ENCODE measurements at regions of chr2 and their contacts with region 1.

Region 1: DNA sequence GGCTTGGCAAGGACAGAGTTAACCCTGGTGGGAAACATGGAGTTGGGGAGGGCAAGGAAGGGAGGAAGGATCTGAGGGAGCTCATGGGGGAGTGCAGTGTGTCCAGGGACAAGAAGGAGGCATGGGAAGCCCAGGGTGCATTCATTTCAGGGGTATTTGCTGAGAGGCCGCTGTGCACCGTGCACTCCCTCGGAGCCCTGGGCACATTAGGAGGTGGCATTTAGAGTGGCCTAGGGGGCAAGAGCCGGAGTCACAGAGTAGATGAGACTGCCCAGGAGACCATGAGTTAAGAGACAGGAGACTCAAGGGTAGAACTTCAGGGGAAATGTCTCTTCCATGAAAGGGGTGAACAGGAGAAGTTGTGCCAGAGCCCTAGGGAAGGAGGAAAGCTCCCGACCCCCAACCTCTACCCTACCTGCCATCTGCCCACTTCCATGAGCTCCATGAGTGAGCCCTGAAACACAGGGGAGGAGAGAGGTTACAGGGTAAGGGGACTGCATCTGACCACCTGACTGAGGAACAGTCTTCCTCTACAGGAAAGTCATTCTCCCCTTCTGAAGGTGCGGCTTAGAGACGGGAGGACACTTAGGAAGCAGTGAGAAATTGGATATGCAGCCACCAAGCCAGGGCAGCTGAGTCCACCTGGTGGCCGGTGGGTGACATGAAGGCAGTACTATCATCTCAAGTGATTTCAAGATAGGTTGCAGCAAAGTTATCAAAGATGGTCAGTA is 58.5 kb upstream of the COPS8 start:
- DNase-seq: peak; percentile 21 to 41 (median 29)
- H3K4me3 ChIP-seq: no peak overlapping the region
- H3K4me3 Mint-ChIP-seq: no peak overlapping the region
- H3K27ac ChIP-seq: no peak overlapping the region
- H3K27ac Mint-ChIP-seq: no peak overlapping the region
- H3K4me1 ChIP-seq: no peaks in the 10 kb centered on the region
- H3K4me1 Mint-ChIP-seq: peaks cover 0 to 2% (median 0%) of the 10 kb centered on the region in 4 donors
- H3K27me3 ChIP-seq: no peaks in the 10 kb centered on the region
- H3K27me3 Mint-ChIP-seq: peaks cover 0 to 1% of the 10 kb centered on the region in 2 donors

Region 2: DNA sequence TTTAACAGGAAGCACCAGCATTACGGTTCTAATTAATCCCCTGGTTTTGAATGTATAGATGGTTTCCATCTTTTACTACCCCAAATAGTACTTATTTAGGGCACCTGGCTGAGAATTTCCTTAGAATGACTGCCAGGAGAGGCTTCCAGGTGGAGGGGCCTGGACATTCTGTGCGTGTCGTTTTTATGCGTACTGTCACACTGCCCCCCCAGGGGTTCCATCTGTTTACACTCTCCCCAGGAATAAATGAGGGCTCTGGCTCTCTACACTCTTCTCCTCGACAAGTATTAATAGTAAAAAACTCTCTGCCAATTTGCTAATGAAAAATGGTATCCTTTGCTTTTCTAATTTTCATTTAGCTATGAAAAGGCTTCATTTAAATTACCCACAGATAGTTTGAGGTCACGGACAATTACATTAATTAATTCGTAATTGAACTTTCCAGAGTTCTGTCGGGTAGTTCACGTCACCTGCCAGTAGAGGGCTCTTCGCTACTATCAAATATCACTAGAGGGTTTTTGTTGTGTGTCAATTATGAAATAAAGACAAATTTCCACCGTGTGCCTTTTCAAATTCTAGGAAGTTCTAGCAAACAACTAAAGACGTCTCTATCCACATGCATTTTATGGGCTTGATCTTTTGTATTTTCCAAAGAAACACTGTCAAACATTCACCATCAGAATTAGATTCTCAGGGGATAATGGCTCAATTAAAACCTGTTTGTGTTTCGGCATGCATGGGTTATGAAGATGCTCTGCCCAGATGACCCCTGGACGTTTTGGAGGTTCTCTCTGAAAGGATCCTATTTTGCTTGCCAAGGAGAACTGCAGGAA is 674.2 kb before region 1 on chr2:
- CTCF ChIA-PET with region 1: interaction called, 8 read pairs
- POLR2A ChIA-PET with region 1: no interaction called
- intact Hi-C with region 1: loop called (anchors 1 kb)
- DNase-seq: peak in 4 of 5 donors; percentile 39 to 51 (median 45)
- H3K4me3 ChIP-seq: no peak overlapping the region
- H3K4me3 Mint-ChIP-seq: peak overlapping the region in 1 of 8 donors; percentile 56
- H3K27ac ChIP-seq: no peak overlapping the region
- H3K27ac Mint-ChIP-seq: peak overlapping the region in 2 of 7 donors; percentile 12 to 72
- H3K4me1 ChIP-seq: no peaks in the 10 kb centered on the region
- H3K4me1 Mint-ChIP-seq: peaks cover 4 to 7% (median 6%) of the 10 kb centered on the region in 4 donors
- H3K27me3 ChIP-seq: no peaks in the 10 kb centered on the region
- H3K27me3 Mint-ChIP-seq: peaks cover 10 to 20% of the 10 kb centered on the region in 2 donors

Region 3: DNA sequence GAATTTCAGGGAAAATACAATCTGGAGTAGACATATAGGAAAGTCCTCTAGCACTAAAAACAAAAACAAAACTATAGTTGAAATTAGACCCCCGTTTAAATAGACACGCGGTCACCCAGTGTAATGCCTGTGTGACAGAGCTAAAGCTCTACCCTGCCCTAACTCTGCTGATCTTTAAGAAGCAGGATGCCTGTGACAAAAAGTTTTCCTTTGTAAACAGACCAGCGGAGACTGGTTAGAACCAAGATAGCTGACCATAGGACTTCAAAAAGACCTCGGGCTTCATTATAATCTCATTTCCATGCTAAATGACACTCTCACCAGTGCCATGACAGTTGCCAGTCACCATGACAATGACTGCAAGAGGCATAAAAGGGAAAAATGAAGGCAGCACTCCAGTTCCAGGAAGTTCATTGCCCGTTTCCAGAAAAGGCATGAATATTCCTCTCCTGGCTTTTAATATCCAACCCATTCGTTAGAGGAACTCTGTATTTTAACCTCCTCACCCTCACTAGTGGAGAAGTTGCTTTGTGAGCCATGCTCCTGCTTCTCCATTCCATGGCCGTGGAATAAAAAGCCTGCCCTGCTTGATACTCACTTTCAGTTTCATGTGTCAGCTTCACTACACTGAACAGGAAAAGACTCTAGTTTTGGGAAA is 98.6 kb before region 1 on chr2:
- CTCF ChIA-PET with region 1: no interaction called
- POLR2A ChIA-PET with region 1: no interaction called
- intact Hi-C with region 1: loop called (anchors 10 kb)
- DNase-seq: no peak
- H3K4me3 ChIP-seq: no peak overlapping the region
- H3K4me3 Mint-ChIP-seq: peak overlapping the region; percentile 41 to 85 (median 74)
- H3K27ac ChIP-seq: no peak overlapping the region
- H3K27ac Mint-ChIP-seq: peak overlapping the region in 2 of 7 donors; percentile 37 to 68
- H3K4me1 ChIP-seq: peaks cover 7% of the 10 kb centered on the region
- H3K4me1 Mint-ChIP-seq: peaks cover 0 to 3% (median 0%) of the 10 kb centered on the region in 4 donors
- H3K27me3 ChIP-seq: peaks cover 4% of the 10 kb centered on the region
- H3K27me3 Mint-ChIP-seq: peaks cover 3 to 17% of the 10 kb centered on the region in 2 donors

Region 4: DNA sequence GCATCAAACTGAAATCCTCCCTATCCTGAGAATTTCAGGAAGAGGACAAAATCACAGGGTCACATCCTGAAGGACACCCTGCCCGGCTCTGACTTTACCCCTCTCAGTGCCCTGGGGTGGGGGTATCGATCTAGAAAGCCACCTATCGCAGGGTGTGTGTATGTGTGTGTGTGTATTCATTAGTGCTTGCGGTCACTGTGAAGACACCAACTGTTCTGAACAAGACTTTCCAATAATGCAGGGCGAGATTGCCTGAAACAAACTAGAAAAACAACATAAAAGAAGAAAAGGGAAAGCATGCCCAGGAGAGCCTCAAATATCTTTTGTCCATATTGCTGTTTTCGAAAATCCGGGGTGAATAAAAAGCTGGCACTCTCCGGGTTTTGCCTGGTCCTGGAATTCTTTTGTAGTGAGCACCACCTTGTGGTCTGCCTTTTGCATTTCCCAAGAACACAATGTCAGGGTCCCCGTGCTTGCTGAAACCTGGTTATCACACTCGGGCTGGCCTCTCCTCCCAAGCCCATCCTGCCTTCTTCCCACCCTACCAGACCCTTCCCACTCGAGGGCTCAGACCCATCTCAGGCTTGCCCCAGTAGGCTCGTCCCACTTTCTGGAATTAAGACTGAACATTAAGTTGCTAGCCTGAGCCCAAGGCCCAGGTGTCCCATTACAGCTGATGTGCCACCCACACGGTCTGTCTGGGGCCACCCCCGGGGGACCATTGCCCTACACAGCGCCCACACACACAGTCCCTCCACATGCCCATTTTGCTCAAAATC is 33.6 kb after region 1 on chr2:
- CTCF ChIA-PET with region 1: no interaction called
- POLR2A ChIA-PET with region 1: no interaction called
- intact Hi-C with region 1: no loop called
- DNase-seq: peak in 3 of 5 donors; percentile 9 to 27 (median 25)
- H3K4me3 ChIP-seq: no peak overlapping the region
- H3K4me3 Mint-ChIP-seq: no peak overlapping the region
- H3K27ac ChIP-seq: no peak overlapping the region
- H3K27ac Mint-ChIP-seq: peak overlapping the region in 1 of 7 donors; percentile 29
- H3K4me1 ChIP-seq: no peaks in the 10 kb centered on the region
- H3K4me1 Mint-ChIP-seq: peaks cover 0 to 2% (median 0%) of the 10 kb centered on the region in 4 donors
- H3K27me3 ChIP-seq: no peaks in the 10 kb centered on the region
- H3K27me3 Mint-ChIP-seq: no peaks in the 10 kb centered on the region

Region 5: DNA sequence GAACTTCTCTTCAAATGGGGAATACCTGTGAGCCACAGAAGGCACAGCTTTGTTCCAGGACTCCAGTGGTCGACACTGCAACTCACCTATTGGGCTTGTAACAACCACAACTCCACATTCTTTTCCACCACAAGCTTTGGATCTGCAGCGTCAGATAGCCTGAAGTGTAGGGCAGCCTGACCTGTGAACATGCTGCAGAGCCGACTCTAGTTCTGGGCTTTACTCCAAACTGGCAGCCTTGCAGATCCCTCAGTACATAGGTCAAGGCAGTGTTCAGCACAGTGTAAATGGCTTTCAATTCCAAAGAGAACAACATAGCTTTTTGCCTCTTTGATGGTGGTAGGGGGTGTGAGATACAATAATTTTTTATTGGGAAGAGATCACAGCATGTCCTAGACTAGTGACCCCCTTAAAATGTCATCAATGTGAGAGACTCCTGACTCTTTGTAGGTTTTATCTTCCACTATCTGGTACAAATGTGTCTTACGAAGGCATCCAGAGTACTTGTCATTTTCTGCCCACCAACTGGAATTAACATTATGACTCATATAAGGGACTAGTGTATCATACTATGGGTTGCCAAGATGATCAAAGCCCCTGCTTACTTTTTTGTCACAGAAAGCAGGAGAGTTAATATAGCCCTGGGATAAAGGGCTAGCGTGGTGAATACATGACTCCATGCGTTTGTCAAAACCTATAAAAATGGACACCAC is 208.4 kb after region 1 on chr2:
- CTCF ChIA-PET with region 1: no interaction called
- POLR2A ChIA-PET with region 1: no interaction called
- intact Hi-C with region 1: no loop called
- DNase-seq: no peak
- H3K4me3 ChIP-seq: no peak overlapping the region
- H3K4me3 Mint-ChIP-seq: no peak overlapping the region
- H3K27ac ChIP-seq: no peak overlapping the region
- H3K27ac Mint-ChIP-seq: no peak overlapping the region
- H3K4me1 ChIP-seq: no peaks in the 10 kb centered on the region
- H3K4me1 Mint-ChIP-seq: no peaks in the 10 kb centered on the region
- H3K27me3 ChIP-seq: no peaks in the 10 kb centered on the region
- H3K27me3 Mint-ChIP-seq: peaks cover 14 to 15% of the 10 kb centered on the region in 2 donors